Uterus (tissue), 4 donors: ENCODE measurements at regions of chr6 and their contacts with region 1.

Region 1: DNA sequence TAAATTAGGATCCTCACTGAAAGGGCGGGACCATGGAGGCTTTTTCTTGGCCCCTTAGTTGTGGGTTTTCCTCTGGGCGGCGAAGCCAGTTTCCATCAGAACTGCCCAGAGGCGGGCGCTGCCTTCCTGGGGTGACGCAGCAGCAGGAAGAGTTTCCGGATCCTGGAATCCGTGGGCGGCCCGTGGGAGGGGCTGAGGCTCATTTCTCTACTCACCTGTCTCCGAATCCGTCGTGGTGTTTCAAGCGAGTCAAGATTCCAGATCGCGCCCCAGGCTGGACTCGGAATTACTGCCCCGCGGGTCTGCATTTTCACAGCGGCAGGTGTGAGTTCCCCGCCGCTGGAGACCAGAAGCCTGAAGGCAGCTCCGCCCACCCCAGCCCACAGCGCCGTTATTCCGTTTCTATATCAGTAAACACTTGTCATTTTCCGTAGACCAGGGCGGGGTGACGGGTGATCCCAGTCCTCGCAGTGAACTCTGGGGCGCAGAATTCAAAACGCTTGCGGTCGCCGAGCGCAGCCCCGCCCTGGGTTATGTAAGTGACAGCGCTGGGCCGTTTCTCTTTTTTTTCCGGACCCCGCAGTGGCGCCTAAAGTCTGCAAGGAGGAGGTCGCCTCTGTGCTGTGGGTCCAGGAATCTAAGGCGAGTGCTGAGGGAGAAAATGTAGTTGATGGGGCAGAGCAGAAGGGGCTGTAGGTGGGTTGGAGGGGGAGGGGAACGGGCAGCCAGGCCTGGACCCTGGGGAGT is 27.2 kb upstream of the POU5F1 start:
- DNase-seq: peak; percentile 89 to 91
- H3K4me3 ChIP-seq: peak overlapping the region; percentile 48 to 79
- H3K27ac ChIP-seq: peak overlapping the region; percentile 92 to 95
- H3K4me1 ChIP-seq: no peaks in the 10 kb centered on the region
- H3K27me3 ChIP-seq: no peaks in the 10 kb centered on the region
- CTCF ChIP-seq: no peak
- POLR2A ChIP-seq: peak; percentile 70 to 75

Region 2: DNA sequence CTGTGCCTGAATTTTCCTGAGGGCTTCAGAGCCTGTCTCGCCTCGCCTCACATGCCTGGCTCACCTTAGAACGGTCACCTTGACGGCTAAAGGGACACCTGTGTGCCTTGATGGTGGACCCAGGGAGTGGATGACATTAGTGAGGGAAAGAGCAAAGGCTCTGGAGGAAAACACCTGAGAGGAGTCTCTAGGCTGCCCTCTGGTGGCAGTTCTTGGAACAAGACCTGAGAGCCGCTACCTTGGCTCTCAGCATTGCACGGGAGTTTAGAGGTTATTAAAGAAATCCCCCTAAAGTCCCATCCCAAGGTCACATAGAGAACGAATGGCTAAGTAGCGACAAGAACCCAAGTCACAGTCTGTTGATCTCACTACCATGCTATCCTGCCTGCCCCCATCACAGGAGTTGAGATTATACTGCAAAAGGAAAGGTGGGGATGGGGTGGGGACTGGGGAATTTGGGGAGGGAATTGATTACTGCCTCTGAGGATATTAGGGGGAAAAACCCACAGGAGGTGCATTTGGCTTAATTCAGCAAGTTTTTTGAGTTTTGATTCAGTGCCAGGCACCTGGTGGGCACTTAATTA is 69.5 kb before region 1 on chr6:
- intact Hi-C with region 1: no loop called
- DNase-seq: peak; percentile 57 to 67
- H3K4me3 ChIP-seq: no peak overlapping the region
- H3K27ac ChIP-seq: no peak overlapping the region
- H3K4me1 ChIP-seq: no peaks in the 10 kb centered on the region
- H3K27me3 ChIP-seq: no peaks in the 10 kb centered on the region
- CTCF ChIP-seq: peak; percentile 62 to 84 (median 75)
- POLR2A ChIP-seq: no peak

Region 3: GRCh38 chr6:31356946-31357466 is 159.3 kb after region 1 on chr6 and contains the start of gene HLA-B:
- intact Hi-C with region 1: loop called (anchors 10 kb)
- DNase-seq: peak; percentile 89 to 92
- H3K4me3 ChIP-seq: peak within 1 kb of the TSS; percentile 67 to 85
- H3K27ac ChIP-seq: peak within 1 kb of the TSS; percentile 88 to 94
- H3K4me1 ChIP-seq: no peaks in the 10 kb centered on the region
- H3K27me3 ChIP-seq: no peaks in the 10 kb centered on the region
- CTCF ChIP-seq: peak in 1 of 4 experiments; percentile 4
- POLR2A ChIP-seq: peak in 1 of 2 donors; percentile 94
- total RNA-seq, gene HLA-B: 134 to 1,272 (median 737) TPM